Activated CD8-positive, alpha-beta T cell treated with anti-CD3 and anti-CD28 coated beads, Interleukin-2, amount 10 ng/mL, durations not matched to agents 7 days and 5 days (primary cell): ENCODE measurements at regions of chr2 and their contacts with region 1.

Region 1: DNA sequence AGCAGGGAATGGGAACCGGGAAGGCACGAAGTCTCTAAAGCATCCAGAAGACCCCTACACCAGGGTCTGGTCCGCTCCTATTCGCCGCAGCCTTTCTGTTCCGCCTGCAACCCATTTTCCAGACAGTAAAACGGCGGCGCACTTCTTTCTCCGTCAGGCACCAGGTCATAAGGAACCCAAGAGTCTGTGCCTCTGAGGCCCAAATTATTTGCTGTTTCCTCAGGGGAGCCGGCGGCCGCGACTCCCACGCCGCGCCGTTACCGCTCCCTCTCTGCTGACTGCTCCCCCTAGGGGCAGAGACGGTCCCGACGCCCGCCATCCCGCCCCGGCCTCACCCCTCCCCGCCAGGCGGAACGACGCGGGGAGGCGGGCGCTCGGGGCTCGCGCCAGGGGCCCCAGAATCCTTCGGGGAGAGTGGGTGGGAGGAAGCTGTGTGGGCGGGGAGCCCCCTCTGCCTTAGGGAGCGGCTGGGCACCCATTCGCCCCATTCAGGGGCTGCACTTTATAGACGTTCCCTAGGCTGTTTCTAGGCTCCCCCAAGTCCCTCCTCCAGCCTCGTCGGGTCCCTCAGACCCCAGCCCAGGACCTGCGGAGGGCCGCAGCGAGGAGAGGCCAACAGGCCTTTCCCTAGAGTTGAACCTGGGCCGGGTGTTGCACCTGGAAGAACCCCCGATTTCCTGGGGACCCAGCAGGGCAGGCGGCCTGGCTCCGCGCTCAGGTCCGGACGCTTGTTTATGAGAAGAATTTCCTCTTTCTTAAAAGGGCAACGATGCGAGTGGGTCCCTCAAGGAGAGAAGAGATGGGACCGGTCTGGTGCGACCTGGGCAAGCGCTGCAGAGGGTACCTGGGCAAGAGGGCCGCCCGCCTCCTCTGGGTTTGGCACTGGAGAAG is 3.6 kb upstream of the CTDSP1 start:
- DNase-seq: peak; percentile 96
- ATAC-seq: peak; percentile 66
- H3K4me3 Mint-ChIP-seq: peak overlapping the region; percentile 85
- H3K27ac Mint-ChIP-seq: peak overlapping the region; percentile 96
- H3K4me1 Mint-ChIP-seq: peaks cover 35% of the 10 kb centered on the region
- H3K27me3 Mint-ChIP-seq: no peaks in the 10 kb centered on the region

Region 2: DNA sequence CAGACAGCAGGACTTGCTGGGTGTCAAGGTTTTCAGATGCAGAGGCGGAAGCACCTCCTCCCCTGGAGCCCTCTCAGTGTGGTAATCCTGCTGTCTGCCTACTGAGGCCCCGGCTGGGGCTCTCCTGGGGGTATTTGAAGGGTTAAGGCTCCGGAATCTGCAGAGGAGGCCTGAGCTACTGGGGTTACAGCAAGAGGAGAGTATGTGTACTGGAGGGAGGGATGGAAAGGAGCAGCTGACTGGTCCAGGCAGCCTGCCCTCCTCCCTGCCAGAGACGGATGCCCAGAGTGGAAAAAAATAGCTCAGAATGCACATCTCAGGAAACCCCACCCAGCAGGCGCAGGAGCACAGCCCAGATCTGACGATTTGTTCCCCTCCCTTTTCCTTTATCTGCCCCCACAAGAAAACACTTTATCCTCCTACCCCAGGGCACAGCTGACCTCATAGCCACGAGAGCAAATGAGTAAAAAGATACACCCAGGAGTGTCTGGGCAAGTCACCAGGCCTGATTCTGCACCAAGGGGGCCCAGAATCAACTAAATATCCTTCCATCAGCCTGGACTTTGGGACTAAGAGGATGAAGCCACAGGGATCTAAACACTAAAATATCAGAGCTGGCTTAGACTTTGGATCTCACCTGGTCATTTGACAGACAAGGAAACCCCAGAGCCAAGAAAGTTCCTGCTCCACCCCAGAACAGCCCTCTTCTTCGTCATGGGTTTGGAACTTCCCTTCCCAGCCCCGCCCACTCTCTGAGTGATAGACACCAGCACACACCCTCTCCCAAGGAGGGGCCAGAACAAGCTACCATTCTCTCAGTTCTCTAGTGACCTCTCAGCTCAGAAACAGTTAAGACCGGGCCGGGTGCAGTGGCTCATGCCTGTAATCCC is 109.2 kb before region 1 on chr2:
- CTCF ChIA-PET with region 1: interaction called, 21 read pairs
- POLR2A ChIA-PET with region 1: interaction called, 23 read pairs
- DNase-seq: peak; percentile 90
- ATAC-seq: peak; percentile 77
- H3K4me3 Mint-ChIP-seq: peak overlapping the region; percentile 91
- H3K27ac Mint-ChIP-seq: peak overlapping the region; percentile 98
- H3K4me1 Mint-ChIP-seq: peaks cover 78% of the 10 kb centered on the region
- H3K27me3 Mint-ChIP-seq: no peaks in the 10 kb centered on the region

Region 3: GRCh38 chr2:218292048-218293014 is 103.7 kb before region 1 on chr2 and contains the start of gene TMBIM1:
- CTCF ChIA-PET with region 1: interaction called, 21 read pairs
- POLR2A ChIA-PET with region 1: interaction called, 23 read pairs
- DNase-seq: peak; percentile 81
- ATAC-seq: peak; percentile 90
- H3K4me3 Mint-ChIP-seq: peak within 1 kb of the TSS; percentile 80
- H3K27ac Mint-ChIP-seq: peak within 1 kb of the TSS; percentile 89
- H3K4me1 Mint-ChIP-seq: peaks cover 60% of the 10 kb centered on the region
- H3K27me3 Mint-ChIP-seq: no peaks in the 10 kb centered on the region
- total RNA-seq, gene TMBIM1: 52.9 to 58.9 TPM

Region 4: GRCh38 chr2:218406209-218406948 is 10.3 kb after region 1 on chr2:
- CTCF ChIA-PET with region 1: interaction called, 13 read pairs
- POLR2A ChIA-PET with region 1: interaction called, 15 read pairs
- DNase-seq: peak; percentile 97
- ATAC-seq: peak; percentile 88
- H3K4me3 Mint-ChIP-seq: peak overlapping the region; percentile 72
- H3K27ac Mint-ChIP-seq: peak overlapping the region; percentile 90
- H3K4me1 Mint-ChIP-seq: peaks cover 65% of the 10 kb centered on the region
- H3K27me3 Mint-ChIP-seq: no peaks in the 10 kb centered on the region

Region 5: DNA sequence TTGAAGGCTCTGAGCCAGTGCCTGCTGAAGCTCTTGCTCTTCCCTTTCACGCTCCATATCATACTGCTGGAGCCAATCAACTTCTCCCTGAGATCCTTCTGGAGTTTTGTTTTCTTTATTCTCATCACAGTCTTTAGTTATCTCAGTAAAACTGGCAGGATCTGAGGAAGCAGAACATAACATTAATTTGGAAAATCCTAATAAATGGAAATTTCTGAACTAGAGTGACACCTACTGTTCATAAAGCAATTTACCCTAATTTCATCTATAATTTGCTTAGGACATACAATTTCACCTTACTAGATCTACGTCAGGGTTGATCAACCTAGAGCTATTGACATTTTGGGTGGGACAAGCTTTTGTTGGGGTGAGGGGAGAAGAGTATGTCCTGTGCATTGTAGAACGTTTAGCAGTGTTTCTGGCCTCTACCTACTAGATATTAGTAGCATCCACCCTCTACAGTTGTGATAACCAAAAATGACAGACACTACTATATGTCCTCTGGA is 70.0 kb after region 1 on chr2:
- CTCF ChIA-PET with region 1: interaction called, 10 read pairs
- POLR2A ChIA-PET with region 1: no interaction called
- DNase-seq: no peak
- ATAC-seq: peak; percentile 39
- H3K4me3 Mint-ChIP-seq: no peak overlapping the region
- H3K27ac Mint-ChIP-seq: no peak overlapping the region
- H3K4me1 Mint-ChIP-seq: peaks cover 9% of the 10 kb centered on the region
- H3K27me3 Mint-ChIP-seq: no peaks in the 10 kb centered on the region